Endothelial cell of umbilical vein (primary cell): ENCODE measurements at regions of chr16 and their contacts with region 1.

Region 1: DNA sequence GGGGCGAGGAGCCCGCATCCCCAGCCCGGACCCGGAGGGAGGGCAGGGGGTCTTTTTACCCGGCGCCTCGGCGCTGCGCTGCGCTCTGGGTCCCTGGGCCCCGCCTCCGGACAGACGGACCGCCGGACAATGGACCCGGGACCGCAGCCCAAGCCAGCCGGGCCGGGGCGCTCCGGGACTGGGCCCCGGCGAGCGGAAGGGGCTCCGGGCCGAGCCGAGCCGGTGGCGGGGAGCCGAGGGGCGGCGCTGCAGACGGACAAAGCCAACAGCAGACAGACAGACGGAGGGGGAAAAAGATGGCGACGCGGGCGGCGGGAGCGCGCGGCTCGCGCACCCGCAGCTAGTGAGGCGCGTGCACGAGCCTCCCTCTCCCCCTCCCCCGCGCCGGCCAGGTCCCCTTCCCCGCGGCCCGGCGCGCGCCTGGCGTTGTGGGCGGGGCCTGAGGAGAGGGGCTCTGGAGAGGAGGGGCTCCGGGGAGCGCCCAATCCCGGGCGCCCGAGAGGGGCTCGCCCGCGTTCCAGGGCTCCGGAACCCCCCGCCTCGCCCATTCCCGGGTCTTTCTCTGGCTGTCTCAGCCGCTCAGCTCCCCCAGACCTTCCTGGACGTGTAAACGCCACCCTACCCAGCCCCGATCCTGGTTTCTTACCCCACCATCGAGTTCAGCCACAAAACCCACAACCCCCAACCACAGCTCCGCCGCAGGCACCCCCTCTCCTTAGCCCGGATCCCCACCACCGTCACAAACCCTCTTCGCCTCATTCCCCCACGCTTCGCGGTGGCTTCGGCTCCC is at the start of gene ZNF821:
- DNase-seq: peak; percentile 72
- H3K4me3 ChIP-seq: peak within 1 kb of the TSS; percentile 45 to 97 (median 90)
- H3K27ac ChIP-seq: peak within 1 kb of the TSS; percentile 62
- H3K4me1 ChIP-seq: peaks cover 24% of the 10 kb centered on the region
- H3K27me3 ChIP-seq: no peaks in the 10 kb centered on the region
- CTCF ChIP-seq: peak; percentile 28 to 58
- POLR2A ChIP-seq: peak; percentile 56
- total RNA-seq, gene ZNF821: 7.3 and 9.6 TPM in 2 replicates

Region 2: DNA sequence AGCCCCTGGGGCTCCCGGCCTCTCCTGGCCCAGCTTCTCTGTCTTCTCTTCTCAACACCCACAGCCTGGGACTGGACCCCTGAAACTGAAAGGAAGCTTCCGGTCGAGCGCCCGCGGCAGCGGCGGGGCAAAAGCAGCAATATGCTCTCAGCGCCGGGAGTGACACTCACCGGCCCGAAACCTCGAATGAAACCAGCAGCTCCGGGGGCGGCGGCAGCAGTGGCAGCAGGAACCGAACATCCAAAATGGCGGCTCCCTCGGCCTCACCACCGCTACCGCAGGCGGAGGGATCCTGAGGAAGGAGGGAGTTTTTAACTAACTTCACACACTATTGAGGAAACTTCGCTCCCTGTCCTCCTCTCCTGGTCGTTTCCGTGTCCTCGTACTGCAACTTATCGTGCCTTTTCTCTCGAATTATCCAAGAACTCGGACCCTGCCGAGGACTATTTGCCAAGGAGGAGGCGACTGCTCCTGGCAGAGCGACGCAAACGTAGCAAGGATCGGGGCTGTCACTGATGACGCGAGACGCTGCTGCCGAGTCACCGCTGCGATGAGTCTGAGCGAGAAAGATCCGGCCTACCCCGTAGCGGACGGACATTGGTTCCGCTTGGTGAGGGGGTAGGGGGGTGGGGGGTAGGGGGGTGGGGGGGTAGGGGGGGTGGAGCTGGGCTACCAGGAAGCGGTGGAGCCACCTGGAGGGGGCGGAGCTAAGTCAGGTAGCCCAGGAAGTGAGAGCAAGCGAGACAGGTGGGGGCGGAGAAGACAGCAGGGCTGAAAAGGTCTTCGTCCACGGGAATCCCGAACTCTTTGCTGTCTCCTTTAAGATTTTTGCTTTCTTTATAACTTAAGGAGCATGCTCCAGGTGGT is 75.2 kb before region 1 on chr16 and contains the start of gene AP1G1:
- CTCF ChIA-PET with region 1: interaction called, 11 read pairs
- POLR2A ChIA-PET with region 1: no interaction called
- dilution Hi-C with region 1: no loop called
- intact Hi-C with region 1: loop called (anchors 5 kb)
- DNase-seq: peak; percentile 97
- H3K4me3 ChIP-seq: peak within 1 kb of the TSS; percentile 88 to 92 (median 92)
- H3K27ac ChIP-seq: peak within 1 kb of the TSS; percentile 94
- H3K4me1 ChIP-seq: peaks cover 18% of the 10 kb centered on the region
- H3K27me3 ChIP-seq: no peaks in the 10 kb centered on the region
- CTCF ChIP-seq: no peak
- POLR2A ChIP-seq: peak; percentile 87
- total RNA-seq, gene AP1G1: 85.3 and 88.4 TPM in 2 replicates

Region 3: GRCh38 chr16:71859762-71860521 is 24.1 kb before region 1 on chr16:
- CTCF ChIA-PET with region 1: interaction called, 14 read pairs
- POLR2A ChIA-PET with region 1: no interaction called
- dilution Hi-C with region 1: no loop called
- intact Hi-C with region 1: no loop called
- DNase-seq: no peak
- H3K4me3 ChIP-seq: no peak overlapping the region
- H3K27ac ChIP-seq: no peak overlapping the region
- H3K4me1 ChIP-seq: no peaks in the 10 kb centered on the region
- H3K27me3 ChIP-seq: no peaks in the 10 kb centered on the region
- CTCF ChIP-seq: no peak
- POLR2A ChIP-seq: no peak

Region 4: GRCh38 chr16:71903608-71904007 is 19.6 kb after region 1 on chr16:
- CTCF ChIA-PET with region 1: interaction called, 17 read pairs
- POLR2A ChIA-PET with region 1: no interaction called
- dilution Hi-C with region 1: no loop called
- intact Hi-C with region 1: no loop called
- DNase-seq: no peak
- H3K4me3 ChIP-seq: no peak overlapping the region
- H3K27ac ChIP-seq: no peak overlapping the region
- H3K4me1 ChIP-seq: peaks cover 2% of the 10 kb centered on the region
- H3K27me3 ChIP-seq: no peaks in the 10 kb centered on the region
- CTCF ChIP-seq: no peak
- POLR2A ChIP-seq: no peak

Region 5: DNA sequence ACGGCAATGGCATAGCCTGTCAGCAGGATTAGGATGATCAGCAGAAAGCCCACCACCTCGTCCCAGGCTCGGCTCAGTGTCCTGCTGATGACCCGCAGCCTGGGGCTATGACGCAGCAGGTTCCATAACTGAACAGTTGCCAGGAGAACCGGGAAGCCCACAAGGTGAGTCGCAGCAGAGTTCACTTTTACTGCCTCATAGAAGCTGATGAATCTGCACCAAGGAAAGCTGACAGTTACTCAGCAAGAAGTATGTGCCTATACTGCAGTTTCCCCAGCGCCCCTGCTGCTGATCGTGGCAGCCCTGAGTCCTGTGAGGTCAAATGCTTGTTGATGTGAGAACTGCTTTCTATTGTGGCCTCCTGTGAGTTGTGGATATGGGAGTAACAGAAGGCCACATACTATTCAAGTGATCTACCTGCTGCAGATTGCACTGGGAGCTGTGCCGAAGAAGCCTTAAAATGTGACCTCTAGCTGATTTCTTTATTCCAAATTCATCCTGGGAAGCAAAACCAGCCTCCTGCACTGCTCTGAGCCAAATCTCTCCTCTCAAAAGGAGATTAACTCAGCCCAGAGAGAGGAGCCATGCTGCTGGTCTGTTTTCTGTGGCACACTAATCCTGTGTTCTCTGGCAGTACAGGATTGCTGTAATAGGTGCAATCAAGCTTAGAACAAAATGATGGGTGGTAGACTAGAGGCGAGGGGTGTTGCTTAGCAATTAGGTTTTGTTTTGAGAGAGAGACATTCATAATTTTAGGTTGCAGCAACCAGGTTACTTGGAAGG is 50.1 kb after region 1 on chr16:
- CTCF ChIA-PET with region 1: interaction called, 27 read pairs
- POLR2A ChIA-PET with region 1: interaction called, 3 read pairs
- dilution Hi-C with region 1: no loop called
- intact Hi-C with region 1: no loop called
- DNase-seq: no peak
- H3K4me3 ChIP-seq: no peak overlapping the region
- H3K27ac ChIP-seq: no peak overlapping the region
- H3K4me1 ChIP-seq: peaks cover 13% of the 10 kb centered on the region
- H3K27me3 ChIP-seq: no peaks in the 10 kb centered on the region
- CTCF ChIP-seq: no peak
- POLR2A ChIP-seq: no peak